ENCODE measurements at regions of chr6 and their contacts with region 1.

Region 1: GRCh38 chr6:43391440-43392031 is 22.1 kb upstream of the ZNF318 start:
- DNase-seq: no peak
- ATAC-seq: peak; percentile 5
- H3K4me3 ChIP-seq: peak overlapping the region; percentile 52
- H3K27ac ChIP-seq: peak overlapping the region; percentile 59
- H3K4me1 ChIP-seq: peaks cover 6% of the 10 kb centered on the region; the same call in 1 of the 2 replicates
- H3K27me3 ChIP-seq: no peaks in the 10 kb centered on the region
- CTCF ChIP-seq: no peak
- EP300 ChIP-seq: no peak
- POLR2A ChIP-seq: no peak
- RAD21 ChIP-seq: no peak

Region 2: DNA sequence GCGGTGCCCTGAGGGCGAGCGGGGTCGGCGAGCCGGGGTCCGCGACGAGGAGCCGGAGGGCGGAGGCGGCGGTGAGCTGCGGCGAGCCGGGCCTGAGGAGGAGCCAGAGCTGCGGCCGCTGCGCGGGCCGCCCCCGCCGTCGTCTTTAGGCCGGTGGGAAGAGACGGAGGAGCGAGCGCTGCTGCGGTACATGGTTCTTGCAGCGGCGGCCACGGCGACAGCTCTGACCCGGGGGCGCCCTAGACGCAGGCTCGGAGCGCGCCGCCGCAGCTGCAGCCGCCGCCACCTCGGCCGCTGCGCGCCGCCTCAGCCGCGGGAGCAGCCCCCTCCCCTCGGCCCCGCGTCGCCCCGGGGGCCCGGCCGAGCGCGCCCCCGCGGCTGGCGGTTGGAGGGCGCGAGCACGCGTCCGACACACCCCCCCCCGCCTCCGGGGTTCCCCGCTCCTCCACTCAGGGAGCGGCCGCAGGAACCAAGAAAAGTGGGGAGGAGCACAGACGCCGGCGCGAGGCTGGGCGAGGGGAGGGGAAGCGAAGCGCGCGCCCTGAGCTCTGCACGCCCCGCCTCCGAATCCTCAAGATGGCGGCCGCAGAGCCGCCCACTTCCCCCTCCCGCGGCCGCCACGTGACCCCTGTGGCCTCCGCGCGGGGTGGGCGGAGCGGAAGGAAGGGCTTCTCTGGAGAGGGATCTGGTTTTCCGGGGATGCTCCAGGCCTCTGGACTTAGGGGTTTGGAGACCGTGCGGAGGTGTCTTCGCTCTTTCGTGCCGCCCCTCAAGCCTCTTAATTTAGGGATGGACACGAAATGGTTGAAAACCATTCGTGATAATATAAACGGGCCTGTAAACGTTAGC is 22.1 kb before region 1 on chr6 and contains the start of gene ZNF318:
- CTCF ChIA-PET with region 1: interaction called, 118 read pairs
- POLR2A ChIA-PET with region 1: interaction called, 91 read pairs
- RAD21 ChIA-PET with region 1: interaction called, 57 read pairs
- SMC1A ChIA-PET with region 1: interaction called, 616 read pairs
- in situ Hi-C with region 1: no loop called
- intact Hi-C with region 1: no loop called
- DNase-seq: peak; percentile 82
- ATAC-seq: peak; percentile 83
- H3K4me3 ChIP-seq: peak within 1 kb of the TSS; percentile 84
- H3K27ac ChIP-seq: peak within 1 kb of the TSS; percentile 89
- H3K4me1 ChIP-seq: peaks cover 26% of the 10 kb centered on the region
- H3K27me3 ChIP-seq: no peaks in the 10 kb centered on the region
- CTCF ChIP-seq: no peak
- EP300 ChIP-seq: peak in 1 of 2 experiments; percentile 47; a peak in 2 of 4 replicates
- POLR2A ChIP-seq: peak; percentile 82
- RAD21 ChIP-seq: no peak
- polyA plus RNA-seq, gene ZNF318: 4.8 to 6.3 TPM

Region 3: DNA sequence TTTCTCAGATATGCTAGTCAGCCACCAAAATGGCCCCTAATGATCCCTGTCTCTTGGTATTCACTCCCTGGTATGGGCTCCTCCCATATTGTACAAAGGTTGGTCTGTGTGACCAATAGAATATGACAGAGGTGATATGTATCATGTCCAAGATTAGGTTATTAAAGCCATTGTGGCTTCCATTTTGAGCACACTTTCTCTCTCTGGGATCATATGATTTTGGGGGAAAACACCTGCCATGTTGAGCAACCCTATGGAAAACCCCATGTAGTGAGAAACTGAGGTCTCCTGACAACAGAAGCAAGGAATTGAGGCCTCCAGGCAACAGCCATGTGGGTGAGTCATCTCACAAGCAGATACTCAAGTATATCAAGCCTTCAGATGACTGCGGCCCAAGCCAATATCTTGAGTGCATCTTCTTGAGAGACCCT is 15.0 kb before region 1 on chr6:
- CTCF ChIA-PET with region 1: interaction called, 26 read pairs
- POLR2A ChIA-PET with region 1: interaction called, 91 read pairs
- RAD21 ChIA-PET with region 1: interaction called, 57 read pairs
- SMC1A ChIA-PET with region 1: interaction called, 616 read pairs
- in situ Hi-C with region 1: no loop called
- intact Hi-C with region 1: no loop called
- DNase-seq: peak; percentile 88
- ATAC-seq: peak; percentile 78
- H3K4me3 ChIP-seq: no peak overlapping the region
- H3K27ac ChIP-seq: peak overlapping the region; percentile 81
- H3K4me1 ChIP-seq: peaks cover 69% of the 10 kb centered on the region
- H3K27me3 ChIP-seq: no peaks in the 10 kb centered on the region
- CTCF ChIP-seq: no peak
- EP300 ChIP-seq: peak; percentile 6 to 67; a peak in 2 of 4 replicates
- POLR2A ChIP-seq: no peak
- RAD21 ChIP-seq: no peak

Region 4: GRCh38 chr6:43408259-43408658 is 16.7 kb after region 1 on chr6:
- CTCF ChIA-PET with region 1: no interaction called
- POLR2A ChIA-PET with region 1: no interaction called
- RAD21 ChIA-PET with region 1: no interaction called
- SMC1A ChIA-PET with region 1: no interaction called
- in situ Hi-C with region 1: no loop called
- intact Hi-C with region 1: no loop called
- DNase-seq: no peak
- ATAC-seq: no peak
- H3K4me3 ChIP-seq: no peak overlapping the region
- H3K27ac ChIP-seq: no peak overlapping the region
- H3K4me1 ChIP-seq: no peaks in the 10 kb centered on the region
- H3K27me3 ChIP-seq: no peaks in the 10 kb centered on the region
- CTCF ChIP-seq: no peak
- EP300 ChIP-seq: no peak
- POLR2A ChIP-seq: no peak
- RAD21 ChIP-seq: no peak

Region 5: DNA sequence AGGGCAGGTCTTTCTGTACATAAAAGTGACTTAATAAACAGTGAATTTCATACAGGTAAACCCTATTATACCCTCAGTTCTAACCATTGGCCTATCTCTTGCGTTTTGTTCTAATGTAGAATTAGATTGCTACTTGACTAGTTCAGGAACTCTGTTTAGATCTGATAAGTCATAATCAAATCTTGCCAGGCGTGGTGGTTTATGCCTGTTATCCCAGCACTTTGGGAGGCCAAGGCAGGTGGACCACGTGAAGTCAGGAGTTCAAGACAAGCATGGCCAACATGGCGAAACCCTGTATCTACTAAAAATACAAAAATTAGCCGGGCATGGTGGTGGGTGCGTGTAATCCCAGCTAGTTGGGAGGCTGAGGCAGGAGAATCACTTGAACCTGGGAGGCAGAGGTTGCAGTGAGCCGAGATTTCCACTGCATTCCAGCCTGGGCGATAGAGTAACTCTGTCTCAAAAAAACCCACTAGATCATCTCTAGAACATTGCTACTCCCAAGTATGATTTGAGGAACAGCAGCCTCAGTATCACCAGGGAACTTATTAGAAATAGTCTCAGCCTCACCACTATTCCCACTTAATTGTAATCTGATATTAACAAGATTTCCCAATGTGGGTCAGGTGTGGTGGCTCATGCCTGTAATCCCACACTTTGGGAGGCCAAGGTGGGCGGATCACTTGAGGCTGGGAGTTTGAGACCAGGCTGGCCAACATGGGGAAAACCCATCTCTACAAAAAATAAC is 225.4 kb after region 1 on chr6:
- CTCF ChIA-PET with region 1: no interaction called
- POLR2A ChIA-PET with region 1: no interaction called
- RAD21 ChIA-PET with region 1: no interaction called
- SMC1A ChIA-PET with region 1: no interaction called
- in situ Hi-C with region 1: no loop called
- intact Hi-C with region 1: no loop called
- DNase-seq: no peak
- ATAC-seq: no peak
- H3K4me3 ChIP-seq: no peak overlapping the region
- H3K27ac ChIP-seq: no peak overlapping the region
- H3K4me1 ChIP-seq: no peaks in the 10 kb centered on the region
- H3K27me3 ChIP-seq: no peaks in the 10 kb centered on the region
- CTCF ChIP-seq: no peak
- EP300 ChIP-seq: no peak
- POLR2A ChIP-seq: no peak
- RAD21 ChIP-seq: no peak

Measured in GM12878 (cell line).